ENCODE measurements at regions of chr20 and their contacts with region 1.

Region 1: DNA sequence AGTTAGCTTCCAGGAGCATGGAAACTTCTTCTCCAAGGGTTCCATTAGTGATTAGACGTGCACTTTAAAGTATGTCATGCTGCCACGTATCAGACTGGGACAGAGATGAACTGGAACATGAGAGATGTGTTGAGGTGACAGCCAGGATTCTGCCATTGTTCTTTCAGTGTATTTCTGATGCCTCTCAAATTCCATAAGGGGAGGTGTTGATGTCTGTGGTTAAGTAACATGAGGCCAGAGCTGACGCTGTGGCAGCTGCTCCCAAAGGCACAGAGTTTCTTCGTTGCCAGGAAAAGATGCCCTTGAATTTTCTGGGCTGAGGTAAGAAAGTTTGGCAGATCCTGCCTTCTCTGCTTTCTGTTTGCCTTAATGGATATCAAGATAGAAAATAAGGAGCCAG is 63.5 kb downstream of the TRMT6 start:
- DNase-seq: no peak
- ATAC-seq: peak; percentile 89

Region 2: DNA sequence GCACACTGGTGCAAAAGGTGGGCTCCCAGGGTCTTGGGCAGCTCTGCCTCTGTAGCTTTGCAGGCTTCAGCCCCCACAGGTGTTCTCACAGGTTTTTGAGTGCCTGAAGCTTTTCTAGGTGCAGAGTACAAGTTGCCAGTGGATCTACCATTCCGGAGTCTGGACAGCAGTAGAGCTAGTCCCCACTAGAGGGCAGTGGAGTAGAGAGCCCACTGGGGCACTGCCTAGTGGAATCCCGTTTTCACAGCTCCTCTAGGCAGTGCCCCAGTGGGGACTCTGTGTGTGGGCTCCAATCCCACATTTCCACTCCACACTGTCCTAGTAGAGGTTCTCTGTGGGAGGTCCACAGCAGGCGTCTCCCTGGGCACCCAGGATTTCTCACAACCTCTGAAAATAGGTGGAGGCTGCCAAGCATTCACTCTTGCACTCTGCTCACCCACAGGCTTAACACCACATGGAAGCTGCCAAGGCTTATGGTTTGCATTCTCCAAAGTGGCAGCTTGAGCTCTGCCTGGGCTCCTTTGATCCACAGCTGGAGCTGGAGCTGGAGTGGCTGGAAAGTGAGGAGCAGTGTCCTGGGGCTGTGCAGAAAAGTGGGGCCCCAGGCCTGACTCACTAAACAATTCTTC is 483.8 kb before region 1 on chr20:
- intact Hi-C with region 1: no loop called
- DNase-seq: no peak
- ATAC-seq: no peak

Region 3: DNA sequence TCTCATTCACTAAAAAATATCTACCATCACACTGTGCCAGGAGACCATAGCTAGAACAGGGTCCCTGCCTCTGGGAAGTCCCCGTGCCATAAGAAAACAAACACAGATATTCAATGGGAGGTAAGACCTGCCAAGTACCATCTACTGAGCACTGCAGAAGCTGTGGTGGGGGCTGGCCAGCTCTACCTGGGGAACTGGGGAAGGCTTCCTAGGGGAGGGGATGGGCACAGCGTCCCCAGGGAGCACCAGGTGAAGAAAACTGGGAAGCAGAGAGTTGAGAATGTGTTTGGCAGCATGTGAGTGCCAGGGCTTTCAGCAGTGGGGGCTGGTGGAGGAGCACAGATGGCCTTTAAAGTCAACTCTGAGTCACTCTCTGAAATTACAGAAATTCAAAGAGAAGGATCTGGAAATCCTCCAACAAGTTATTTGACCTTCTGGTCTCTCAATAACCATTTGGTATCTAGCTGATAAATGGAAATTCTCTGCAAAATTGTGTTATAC is 51.4 kb before region 1 on chr20:
- intact Hi-C with region 1: loop called (anchors 2 kb)
- DNase-seq: no peak
- ATAC-seq: peak; percentile 15

Region 4: GRCh38 chr20:5863040-5863833 is 23.6 kb before region 1 on chr20:
- intact Hi-C with region 1: loop called (anchors 2 kb)
- DNase-seq: no peak
- ATAC-seq: peak; percentile 44

Region 5: DNA sequence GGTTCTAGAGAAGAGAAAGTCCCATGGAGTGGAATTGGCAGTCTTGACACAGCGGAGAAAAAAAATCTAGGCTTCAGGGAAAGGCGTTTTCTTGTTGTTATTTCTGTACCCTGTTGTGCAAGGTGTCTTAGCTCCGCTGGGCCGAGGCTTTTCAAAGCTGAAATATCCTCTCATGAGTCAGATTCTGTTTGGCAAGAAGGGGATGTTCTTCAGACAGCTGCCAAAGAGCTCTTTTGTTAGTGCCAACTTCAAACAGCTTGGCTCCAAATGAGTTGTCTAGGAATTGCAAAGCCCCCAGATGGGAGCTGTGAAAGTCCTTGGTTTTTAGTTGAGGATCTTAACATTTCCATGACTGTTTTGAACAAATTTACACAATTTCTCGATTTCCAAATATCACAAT is 121.5 kb after region 1 on chr20:
- intact Hi-C with region 1: no loop called
- DNase-seq: no peak
- ATAC-seq: peak; percentile 25